CD8-positive, alpha-beta T cell (primary cell): ENCODE measurements at regions of chr11 and their contacts with region 1.

Region 1: DNA sequence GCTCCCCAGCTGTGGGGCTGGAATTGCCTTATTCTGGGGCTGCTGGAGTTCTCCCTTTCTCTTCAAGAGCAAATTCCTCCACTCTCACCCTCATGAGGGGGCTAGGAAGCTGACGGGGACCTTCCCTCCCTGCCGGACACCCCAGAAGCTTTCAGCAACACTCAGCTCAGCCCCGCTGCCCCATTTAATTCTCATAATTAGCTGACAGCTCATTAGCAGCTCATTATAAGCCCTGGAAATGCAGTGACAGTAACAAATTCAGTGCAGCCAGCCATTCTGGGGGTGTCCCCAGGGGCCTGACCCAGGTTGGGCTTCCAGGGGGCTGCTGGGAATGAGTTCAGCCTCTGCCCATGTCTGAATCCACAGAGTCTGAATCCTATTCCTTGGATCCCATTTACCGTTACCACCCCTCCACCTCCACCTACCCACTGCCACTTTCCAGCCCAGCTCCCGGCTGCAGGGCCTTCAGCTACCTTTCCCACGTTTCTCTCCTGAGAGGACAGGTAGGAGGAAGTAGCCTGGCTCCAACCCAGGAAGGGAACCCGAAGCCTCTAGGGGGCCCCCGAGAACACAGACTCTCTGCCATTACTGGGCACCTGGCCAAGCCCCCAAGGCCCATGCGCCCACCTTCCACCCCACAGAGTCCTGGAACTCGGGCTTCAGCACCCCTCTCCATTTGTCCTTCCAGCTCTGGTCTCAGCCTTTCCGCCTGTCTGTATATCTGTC is 101.7 kb upstream of the LMO1 start:
- DNase-seq: no peak
- ATAC-seq: no peak
- H3K4me3 ChIP-seq: no peak overlapping the region
- H3K4me3 Mint-ChIP-seq: no peak overlapping the region
- H3K27ac ChIP-seq: no peak overlapping the region
- H3K27ac Mint-ChIP-seq: no peak overlapping the region
- H3K4me1 ChIP-seq: no peaks in the 10 kb centered on the region
- H3K4me1 Mint-ChIP-seq: no peaks in the 10 kb centered on the region
- H3K27me3 ChIP-seq: no peaks in the 10 kb centered on the region
- H3K27me3 Mint-ChIP-seq: no peaks in the 10 kb centered on the region
- CTCF ChIP-seq: no peak

Region 2: GRCh38 chr11:8354622-8355415 is 10.6 kb before region 1 on chr11:
- CTCF ChIA-PET with region 1: no interaction called
- POLR2A ChIA-PET with region 1: no interaction called
- intact Hi-C with region 1: loop called in 1 of 2 experiments (anchors 1 kb)
- DNase-seq: no peak
- ATAC-seq: no peak
- H3K4me3 ChIP-seq: no peak overlapping the region
- H3K4me3 Mint-ChIP-seq: no peak overlapping the region
- H3K27ac ChIP-seq: no peak overlapping the region
- H3K27ac Mint-ChIP-seq: no peak overlapping the region
- H3K4me1 ChIP-seq: no peaks in the 10 kb centered on the region
- H3K4me1 Mint-ChIP-seq: peaks cover 2% of the 10 kb centered on the region
- H3K27me3 ChIP-seq: peaks cover 0 to 2% of the 10 kb centered on the region in 2 experiments
- H3K27me3 Mint-ChIP-seq: peaks cover 18% of the 10 kb centered on the region
- CTCF ChIP-seq: no peak